Common myeloid progenitor, CD34-positive (primary cell): ENCODE measurements at regions of chr2 and their contacts with region 1.

Region 1: GRCh38 chr2:240586198-240586918 is at the start of gene CAPN10:
- DNase-seq: peak; percentile 91 to 95 (median 95)
- H3K4me3 ChIP-seq: peak within 1 kb of the TSS; percentile 68 to 97 (median 90)
- H3K27ac ChIP-seq: peak within 1 kb of the TSS; percentile 58 to 84
- H3K4me1 ChIP-seq: peaks cover 2 to 34% (median 32%) of the 10 kb centered on the region in 4 experiments
- H3K27me3 ChIP-seq: no peaks in the 10 kb centered on the region

Region 2: DNA sequence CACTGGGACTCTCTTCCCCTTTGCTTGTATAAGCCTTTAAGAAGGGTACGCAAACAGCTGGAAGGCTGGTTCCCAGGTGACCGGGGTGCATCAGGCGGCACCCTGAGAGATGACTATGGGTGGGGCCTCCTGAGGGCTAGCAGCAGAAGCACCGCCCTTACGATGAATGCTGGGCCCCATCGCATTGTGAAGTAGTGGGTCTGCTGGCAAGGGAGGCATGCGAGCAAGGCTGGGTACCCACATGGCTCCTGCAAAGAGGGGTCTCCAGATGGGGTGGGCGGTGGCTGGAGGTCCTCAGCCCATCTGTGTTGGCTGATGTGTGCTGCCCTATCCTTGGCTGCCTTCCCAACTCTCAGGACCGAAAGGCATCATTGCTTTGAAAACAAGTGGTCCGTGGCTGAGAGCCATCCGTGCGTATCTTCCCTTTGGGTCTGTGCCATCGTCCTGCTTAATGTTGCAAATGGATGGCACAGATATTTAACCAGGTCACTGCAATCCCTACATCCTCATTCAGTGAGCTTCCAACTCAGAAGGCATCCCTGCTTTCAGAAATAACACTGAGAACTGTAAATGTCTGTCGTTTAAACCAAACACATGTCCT is 234.4 kb before region 1 on chr2:
- CTCF ChIA-PET with region 1: no interaction called
- POLR2A ChIA-PET with region 1: no interaction called
- DNase-seq: no peak
- H3K4me3 ChIP-seq: no peak overlapping the region
- H3K27ac ChIP-seq: no peak overlapping the region
- H3K4me1 ChIP-seq: no peaks in the 10 kb centered on the region
- H3K27me3 ChIP-seq: peaks cover 0 to 8% (median 0%) of the 10 kb centered on the region in 5 experiments

Region 3: DNA sequence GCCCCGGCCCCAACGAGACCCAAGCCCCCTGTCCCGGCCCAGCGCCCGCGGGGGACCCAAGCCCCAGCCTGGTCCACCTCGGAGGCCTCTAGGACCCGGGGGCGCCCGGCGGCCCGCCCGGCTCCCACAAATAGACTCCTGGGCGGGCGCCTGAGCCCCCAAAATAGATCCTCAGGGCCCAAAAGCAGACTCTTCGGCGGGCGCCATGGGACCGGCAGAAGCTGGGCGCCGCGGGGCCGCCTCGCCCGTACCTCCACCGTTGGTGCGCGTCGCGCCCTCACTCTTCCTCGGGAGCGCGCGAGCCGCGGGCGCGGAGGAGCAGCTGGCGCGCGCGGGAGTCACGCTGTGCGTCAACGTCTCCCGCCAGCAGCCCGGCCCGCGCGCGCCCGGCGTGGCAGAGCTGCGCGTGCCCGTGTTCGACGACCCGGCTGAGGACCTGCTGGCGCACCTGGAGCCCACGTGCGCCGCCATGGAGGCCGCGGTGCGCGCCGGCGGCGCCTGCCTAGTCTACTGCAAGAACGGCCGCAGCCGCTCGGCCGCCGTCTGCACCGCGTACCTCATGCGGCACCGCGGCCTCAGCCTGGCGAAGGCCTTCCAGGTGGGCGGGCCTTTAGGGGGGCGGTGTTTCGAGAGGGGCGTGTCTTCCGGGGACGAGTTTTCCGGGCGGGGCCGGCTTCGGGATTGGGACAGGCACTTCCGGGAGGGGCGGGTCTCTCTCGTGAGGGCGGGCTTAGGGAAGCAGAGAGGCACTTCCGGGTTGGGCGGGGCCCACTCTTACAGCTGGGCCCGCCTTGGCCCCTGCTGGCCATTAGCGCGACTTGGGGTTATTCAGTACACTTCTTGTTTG is 25.7 kb before region 1 on chr2:
- CTCF ChIA-PET with region 1: interaction called, 16 read pairs
- POLR2A ChIA-PET with region 1: interaction called, 39 read pairs
- DNase-seq: peak; percentile 97 to 99 (median 98)
- H3K4me3 ChIP-seq: peak overlapping the region; percentile 43 to 81 (median 75)
- H3K27ac ChIP-seq: peak overlapping the region; percentile 46 to 88
- H3K4me1 ChIP-seq: peaks cover 16 to 68% (median 52%) of the 10 kb centered on the region in 4 experiments
- H3K27me3 ChIP-seq: no peaks in the 10 kb centered on the region

Region 4: DNA sequence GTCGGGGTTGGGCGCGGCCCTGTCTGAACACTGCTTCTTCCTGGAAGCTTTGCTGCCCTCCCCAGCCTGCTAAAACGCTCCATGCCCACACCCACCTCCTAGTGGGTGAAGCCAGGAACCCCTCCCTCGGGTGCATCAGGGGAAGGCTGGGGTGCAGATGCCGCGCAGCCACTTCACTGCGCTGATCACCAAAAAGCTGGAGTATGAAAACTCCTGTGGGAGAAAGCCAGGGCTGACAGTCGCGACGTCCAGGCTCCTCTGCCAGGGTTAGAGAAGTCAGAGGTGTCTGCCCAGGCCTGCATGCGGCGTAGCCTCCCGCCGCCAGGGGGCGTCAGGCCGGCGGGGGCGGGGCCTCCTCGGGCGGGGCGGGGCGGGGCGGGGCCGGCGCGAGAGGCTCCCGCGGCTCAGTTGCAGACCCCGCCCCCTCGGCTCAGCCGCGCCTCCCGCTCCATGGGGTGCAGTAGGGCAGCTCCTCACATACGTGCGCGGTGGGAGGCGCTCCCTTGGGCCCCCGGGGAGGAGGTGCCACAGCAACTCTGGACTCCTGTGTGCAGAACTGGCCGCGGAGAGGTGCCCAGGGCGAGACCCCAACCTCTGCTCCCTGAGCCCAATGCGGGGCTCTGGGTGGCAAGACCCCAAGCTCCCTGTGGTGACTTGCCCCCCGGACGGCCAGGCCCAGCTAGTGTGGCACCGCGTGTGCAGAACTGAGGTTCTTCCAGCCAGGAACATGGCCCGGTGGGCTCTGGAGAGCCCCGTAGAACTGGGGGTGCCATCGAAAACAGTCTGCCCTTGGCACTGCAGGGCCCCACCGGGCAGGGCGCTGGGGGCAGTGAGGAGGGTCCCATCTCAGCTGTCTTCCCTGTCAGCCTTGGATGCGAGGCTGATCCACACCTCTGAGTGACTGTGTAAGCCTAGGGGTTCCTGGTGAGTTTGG is 19.9 kb before region 1 on chr2:
- CTCF ChIA-PET with region 1: interaction called, 16 read pairs
- POLR2A ChIA-PET with region 1: interaction called, 39 read pairs
- DNase-seq: peak; percentile 84 to 90 (median 89)
- H3K4me3 ChIP-seq: peak overlapping the region; percentile 13 to 86 (median 71)
- H3K27ac ChIP-seq: peak overlapping the region; percentile 76 to 92
- H3K4me1 ChIP-seq: peaks cover 13 to 73% (median 67%) of the 10 kb centered on the region in 4 experiments
- H3K27me3 ChIP-seq: no peaks in the 10 kb centered on the region

Region 5: GRCh38 chr2:240572141-240573070 is 14.0 kb before region 1 on chr2:
- CTCF ChIA-PET with region 1: interaction called, 20 read pairs
- POLR2A ChIA-PET with region 1: interaction called, 39 read pairs
- DNase-seq: no peak
- H3K4me3 ChIP-seq: no peak overlapping the region
- H3K27ac ChIP-seq: no peak overlapping the region
- H3K4me1 ChIP-seq: peaks cover 0 to 25% (median 25%) of the 10 kb centered on the region in 4 experiments
- H3K27me3 ChIP-seq: no peaks in the 10 kb centered on the region

Region 6: DNA sequence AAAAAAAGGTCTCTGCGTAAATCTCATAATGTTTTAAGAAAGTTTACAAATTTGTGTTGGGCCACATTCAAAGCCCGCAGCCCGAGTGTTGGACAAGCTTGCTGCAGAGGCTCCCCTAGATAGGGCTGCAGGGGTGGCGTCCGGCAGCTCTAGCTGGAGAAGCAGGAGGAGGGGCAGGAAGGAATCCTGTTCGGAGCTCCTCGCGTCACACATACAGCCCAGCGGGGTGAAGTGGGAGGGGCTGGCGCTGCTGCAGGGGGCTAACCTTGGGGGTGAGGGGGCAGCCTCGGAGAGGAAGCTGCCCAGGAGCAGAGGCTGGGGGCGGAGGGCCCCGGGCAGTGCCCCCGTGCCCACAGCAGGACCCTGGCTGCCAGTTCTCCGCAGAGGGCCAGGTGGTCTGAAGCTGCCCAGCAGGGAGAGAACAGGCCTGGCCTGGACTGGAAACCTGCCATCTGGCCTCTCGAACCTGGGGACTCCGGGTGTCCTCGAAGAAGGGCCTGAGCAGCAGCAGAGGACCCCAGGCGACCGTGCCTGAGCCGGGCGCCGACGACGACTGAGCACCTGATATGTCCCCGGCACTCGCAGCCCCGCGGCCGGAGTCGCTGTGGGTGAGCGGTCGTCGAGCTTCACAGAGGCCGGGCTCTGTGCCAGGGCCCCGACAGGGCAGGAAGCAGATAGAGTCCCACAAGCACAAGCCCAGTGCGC is 36.3 kb after region 1 on chr2:
- CTCF ChIA-PET with region 1: interaction called, 11 read pairs
- POLR2A ChIA-PET with region 1: interaction called, 4 read pairs
- DNase-seq: peak; percentile 74 to 92 (median 86)
- H3K4me3 ChIP-seq: peak overlapping the region in 2 of 7 experiments; percentile 33 to 45
- H3K27ac ChIP-seq: no peak overlapping the region
- H3K4me1 ChIP-seq: peaks cover 4 to 72% (median 68%) of the 10 kb centered on the region in 4 experiments
- H3K27me3 ChIP-seq: no peaks in the 10 kb centered on the region